Tibial artery (tissue), 4 donors: ENCODE measurements at regions of chr12 and their contacts with region 1.

Region 1: GRCh38 chr12:132414634-132415326 is 75.2 kb upstream of the FBRSL1 start:
- DNase-seq: peak; percentile 61 to 78
- H3K4me3 ChIP-seq: no peak overlapping the region
- H3K27ac ChIP-seq: no peak overlapping the region
- H3K4me1 ChIP-seq: peaks cover 0 to 11% (median 2%) of the 10 kb centered on the region in 4 donors
- H3K27me3 ChIP-seq: peaks cover 0 to 70% of the 10 kb centered on the region in 2 donors
- CTCF ChIP-seq: peak; percentile 77 to 85

Region 2: GRCh38 chr12:132153501-132154340 is 261.1 kb before region 1 on chr12:
- intact Hi-C with region 1: loop called (anchors 5 kb)
- DNase-seq: peak; percentile 36 to 61
- H3K4me3 ChIP-seq: peak overlapping the region; percentile 8 to 34
- H3K27ac ChIP-seq: no peak overlapping the region
- H3K4me1 ChIP-seq: peaks cover 0 to 8% (median 5%) of the 10 kb centered on the region in 4 donors
- H3K27me3 ChIP-seq: no peaks in the 10 kb centered on the region
- CTCF ChIP-seq: peak; percentile 85 to 91

Region 3: DNA sequence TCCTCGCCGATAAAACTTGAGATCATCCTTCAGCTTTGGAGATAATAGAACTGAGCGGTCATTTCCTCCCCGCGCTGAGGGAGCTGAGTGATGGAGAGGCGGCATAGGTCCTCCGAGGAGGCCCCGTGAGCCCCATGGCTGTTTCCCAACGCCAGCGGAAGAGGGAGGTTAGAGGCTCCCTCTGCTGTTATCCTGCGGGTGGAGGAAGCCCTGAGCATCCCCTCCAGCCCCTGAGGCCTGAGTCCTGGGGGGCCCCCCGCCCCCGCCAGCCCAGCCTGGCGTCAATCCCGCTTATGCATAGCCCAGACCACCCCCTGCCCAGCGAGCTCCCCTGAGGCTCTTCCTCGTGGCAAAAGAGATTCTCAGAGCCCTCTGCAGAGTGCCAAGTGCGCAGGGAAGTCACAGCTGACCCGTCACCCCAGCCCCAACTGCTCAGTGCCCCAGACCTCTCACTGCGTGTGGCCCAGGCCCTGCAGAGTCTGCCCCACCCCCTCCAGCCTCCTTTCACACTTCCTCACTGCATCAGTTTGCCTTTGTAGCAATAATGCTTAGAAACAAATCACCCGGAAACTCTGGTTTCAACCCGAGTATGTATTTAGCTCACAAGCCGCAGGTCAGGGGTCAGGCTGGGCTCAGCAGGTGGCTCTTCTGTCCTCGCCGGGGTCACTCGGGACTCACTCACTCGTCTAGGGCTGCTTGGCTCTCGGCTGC is 40.7 kb before region 1 on chr12:
- intact Hi-C with region 1: no loop called
- DNase-seq: no peak
- H3K4me3 ChIP-seq: no peak overlapping the region
- H3K27ac ChIP-seq: no peak overlapping the region
- H3K4me1 ChIP-seq: no peaks in the 10 kb centered on the region
- H3K27me3 ChIP-seq: peaks cover 0 to 64% of the 10 kb centered on the region in 2 donors
- CTCF ChIP-seq: no peak

Region 4: GRCh38 chr12:132523576-132524331 is 109.0 kb after region 1 on chr12:
- intact Hi-C with region 1: loop called (anchors 5 kb)
- DNase-seq: peak in 1 of 2 donors; percentile 58
- H3K4me3 ChIP-seq: no peak overlapping the region
- H3K27ac ChIP-seq: no peak overlapping the region
- H3K4me1 ChIP-seq: peaks cover 0 to 19% (median 8%) of the 10 kb centered on the region in 4 donors
- H3K27me3 ChIP-seq: no peaks in the 10 kb centered on the region
- CTCF ChIP-seq: peak; percentile 70 to 75

Region 5: DNA sequence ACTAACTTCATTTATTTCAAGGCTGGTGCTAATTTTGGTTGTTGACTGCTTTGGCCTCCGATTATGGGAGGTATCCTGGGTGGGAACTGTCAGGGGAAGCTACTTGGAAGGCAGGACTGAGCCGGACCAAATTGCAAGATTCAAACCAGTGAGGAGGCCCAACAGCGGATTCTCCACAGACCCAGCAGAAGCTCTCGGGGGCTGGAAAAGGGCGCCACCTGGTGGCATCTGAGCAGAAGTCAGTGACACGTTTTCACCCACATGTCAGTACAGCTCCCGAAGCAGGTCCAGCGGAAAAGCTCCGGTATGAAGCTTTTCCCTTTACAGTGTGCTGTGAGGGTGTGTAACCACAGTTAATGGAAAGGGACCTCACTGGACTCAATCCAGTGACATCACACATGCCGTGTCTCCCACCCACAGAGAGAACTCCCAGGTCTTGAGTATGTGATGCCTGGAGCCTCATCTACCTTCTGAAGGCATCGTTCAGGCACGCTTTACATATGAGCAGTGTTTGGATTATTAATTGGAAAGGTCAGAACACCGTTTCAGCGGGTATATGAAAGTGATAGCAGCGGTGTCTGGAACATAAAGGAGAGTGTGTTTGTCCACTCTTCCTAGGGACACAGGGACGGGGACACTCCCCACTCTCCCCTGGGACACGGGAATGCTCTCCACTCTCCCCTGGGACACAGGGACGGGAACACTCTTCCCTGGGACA is 200.2 kb after region 1 on chr12:
- intact Hi-C with region 1: loop called (anchors 5 kb)
- DNase-seq: peak; percentile 72 to 87
- H3K4me3 ChIP-seq: no peak overlapping the region
- H3K27ac ChIP-seq: no peak overlapping the region
- H3K4me1 ChIP-seq: peaks cover 0 to 23% (median 9%) of the 10 kb centered on the region in 4 donors
- H3K27me3 ChIP-seq: peaks cover 14 to 67% of the 10 kb centered on the region in 2 donors
- CTCF ChIP-seq: peak; percentile 83 to 90